Ovary (tissue), 10 donors: ENCODE measurements at regions of chr4 and their contacts with region 1.

Region 1: DNA sequence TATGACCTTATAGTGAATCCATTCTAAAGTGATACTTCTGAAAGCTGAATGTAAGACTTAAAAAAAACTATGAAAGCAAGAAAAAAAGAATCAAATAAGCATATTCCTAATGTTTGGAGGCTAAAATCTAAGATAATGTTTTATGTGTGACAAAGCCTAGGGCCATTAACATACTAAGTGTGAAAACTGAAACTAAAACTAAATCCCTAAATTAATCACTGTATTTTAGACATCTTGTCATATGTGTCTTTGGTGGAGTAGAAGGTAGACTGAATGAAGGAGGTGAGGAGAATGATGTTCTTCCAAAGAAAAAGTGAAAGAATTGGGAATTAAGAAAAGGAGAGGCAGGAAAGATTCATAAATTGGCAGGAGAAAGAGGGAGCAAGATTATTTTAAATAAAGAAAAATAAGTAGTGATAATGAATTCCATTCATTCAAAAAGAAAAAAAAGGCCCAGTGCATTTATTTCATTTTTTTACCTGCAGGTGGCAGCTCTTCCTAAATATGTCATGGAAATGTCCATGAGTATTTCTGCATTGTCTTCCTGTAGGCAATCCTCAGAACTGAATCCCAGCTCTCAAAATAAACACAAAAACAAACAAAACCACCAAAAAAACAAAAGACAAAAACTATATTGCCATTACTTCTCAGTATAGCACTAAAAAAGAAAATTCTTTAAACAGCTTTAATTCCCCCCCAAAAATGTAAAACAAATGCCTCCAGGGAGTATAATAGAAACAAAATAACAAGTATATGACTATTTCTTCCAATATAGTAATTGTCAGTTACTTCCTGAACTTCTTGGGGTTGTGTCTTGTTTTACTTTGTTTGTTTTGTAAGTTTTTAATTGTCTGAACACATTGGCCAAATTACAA is 17.0 kb upstream of the AP1AR start:
- DNase-seq: no peak
- H3K4me3 ChIP-seq: no peak overlapping the region
- H3K27ac ChIP-seq: no peak overlapping the region
- H3K4me1 ChIP-seq: no peaks in the 10 kb centered on the region
- H3K27me3 ChIP-seq: no peaks in the 10 kb centered on the region
- CTCF ChIP-seq: peak; percentile 23 to 38 (median 32)
- EP300 ChIP-seq: no peak
- POLR2A ChIP-seq: no peak

Region 2: GRCh38 chr4:112523764-112524505 is 309.3 kb after region 1 on chr4:
- intact Hi-C with region 1: loop called in 2 of 4 experiments (anchors 10 kb)
- DNase-seq: peak; percentile 37 to 68 (median 47)
- H3K4me3 ChIP-seq: peak overlapping the region; percentile 25
- H3K27ac ChIP-seq: no peak overlapping the region
- H3K4me1 ChIP-seq: peaks cover 2% of the 10 kb centered on the region
- H3K27me3 ChIP-seq: peaks cover 6% of the 10 kb centered on the region
- CTCF ChIP-seq: peak; percentile 27 to 39 (median 28)
- EP300 ChIP-seq: no peak
- POLR2A ChIP-seq: no peak

Region 3: GRCh38 chr4:112604589-112604988 is 390.0 kb after region 1 on chr4:
- intact Hi-C with region 1: loop called in 1 of 4 experiments (anchors 10 kb)
- DNase-seq: peak in 3 of 5 donors; percentile 16 to 48 (median 34)
- H3K4me3 ChIP-seq: no peak overlapping the region
- H3K27ac ChIP-seq: no peak overlapping the region
- H3K4me1 ChIP-seq: no peaks in the 10 kb centered on the region
- H3K27me3 ChIP-seq: no peaks in the 10 kb centered on the region
- CTCF ChIP-seq: peak in 2 of 3 donors; percentile 13 to 33
- EP300 ChIP-seq: no peak
- POLR2A ChIP-seq: no peak

Region 4: GRCh38 chr4:112951362-112952312 is 737.0 kb after region 1 on chr4:
- intact Hi-C with region 1: loop called in 1 of 4 experiments (anchors 5 kb)
- DNase-seq: no peak
- H3K4me3 ChIP-seq: no peak overlapping the region
- H3K27ac ChIP-seq: no peak overlapping the region
- H3K4me1 ChIP-seq: no peaks in the 10 kb centered on the region
- H3K27me3 ChIP-seq: no peaks in the 10 kb centered on the region
- CTCF ChIP-seq: peak in 1 of 3 donors; percentile 33
- EP300 ChIP-seq: no peak
- POLR2A ChIP-seq: no peak